Naive thymus-derived CD4-positive, alpha-beta T cell (primary cell): ENCODE measurements at regions of chr7 and their contacts with region 1.

Region 1: GRCh38 chr7:27662490-27663205 is at the start of gene HIBADH:
- DNase-seq: peak; percentile 94 to 99 (median 97)
- ATAC-seq: peak; percentile 97
- H3K4me3 ChIP-seq: peak within 1 kb of the TSS; percentile 97
- H3K4me3 Mint-ChIP-seq: peak within 1 kb of the TSS; percentile 81 to 92 (median 86)
- H3K27ac ChIP-seq: peak within 1 kb of the TSS; percentile 89
- H3K27ac Mint-ChIP-seq: peak within 1 kb of the TSS; percentile 84 to 97 (median 93)
- H3K4me1 ChIP-seq: peaks cover 6% of the 10 kb centered on the region in 2 donors
- H3K4me1 Mint-ChIP-seq: peaks cover 0 to 40% (median 25%) of the 10 kb centered on the region in 7 donors
- H3K27me3 ChIP-seq: no peaks in the 10 kb centered on the region
- H3K27me3 Mint-ChIP-seq: peaks cover 0 to 2% (median 0%) of the 10 kb centered on the region in 5 donors
- total RNA-seq, gene HIBADH: 8.0 to 16.5 (median 14.3) TPM

Region 2: GRCh38 chr7:25951031-25951948 is 1711.4 kb before region 1 on chr7:
- CTCF ChIA-PET with region 1: no interaction called
- POLR2A ChIA-PET with region 1: no interaction called
- intact Hi-C with region 1: loop called (anchors 2 to 5 kb)
- DNase-seq: peak; percentile 70 to 94 (median 87)
- ATAC-seq: peak; percentile 99
- H3K4me3 ChIP-seq: peak overlapping the region; percentile 61
- H3K4me3 Mint-ChIP-seq: peak overlapping the region; percentile 87 to 94 (median 92)
- H3K27ac ChIP-seq: peak overlapping the region; percentile 52
- H3K27ac Mint-ChIP-seq: peak overlapping the region in 7 of 9 donors; percentile 45 to 87 (median 81)
- H3K4me1 ChIP-seq: peaks cover 7 to 14% of the 10 kb centered on the region in 2 donors
- H3K4me1 Mint-ChIP-seq: peaks cover 16 to 31% (median 20%) of the 10 kb centered on the region in 7 donors
- H3K27me3 ChIP-seq: no peaks in the 10 kb centered on the region
- H3K27me3 Mint-ChIP-seq: peaks cover 0 to 22% (median 5%) of the 10 kb centered on the region in 5 donors

Region 3: GRCh38 chr7:27184337-27185012 is 478.2 kb before region 1 on chr7:
- CTCF ChIA-PET with region 1: no interaction called
- POLR2A ChIA-PET with region 1: no interaction called
- intact Hi-C with region 1: loop called in 1 of 2 experiments (anchors 5 kb)
- DNase-seq: peak in 2 of 9 donors; percentile 36 to 38
- ATAC-seq: peak; percentile 22
- H3K4me3 ChIP-seq: peak overlapping the region; percentile 39
- H3K4me3 Mint-ChIP-seq: peak overlapping the region; percentile 69 to 87 (median 79)
- H3K27ac ChIP-seq: no peak overlapping the region
- H3K27ac Mint-ChIP-seq: peak overlapping the region in 7 of 9 donors; percentile 43 to 84 (median 73)
- H3K4me1 ChIP-seq: peaks cover 40 to 52% of the 10 kb centered on the region in 2 donors
- H3K4me1 Mint-ChIP-seq: peaks cover 29 to 62% (median 51%) of the 10 kb centered on the region in 7 donors
- H3K27me3 ChIP-seq: peaks cover 47 to 89% of the 10 kb centered on the region in 2 donors
- H3K27me3 Mint-ChIP-seq: peaks cover 78 to 92% (median 81%) of the 10 kb centered on the region in 5 donors

Region 4: DNA sequence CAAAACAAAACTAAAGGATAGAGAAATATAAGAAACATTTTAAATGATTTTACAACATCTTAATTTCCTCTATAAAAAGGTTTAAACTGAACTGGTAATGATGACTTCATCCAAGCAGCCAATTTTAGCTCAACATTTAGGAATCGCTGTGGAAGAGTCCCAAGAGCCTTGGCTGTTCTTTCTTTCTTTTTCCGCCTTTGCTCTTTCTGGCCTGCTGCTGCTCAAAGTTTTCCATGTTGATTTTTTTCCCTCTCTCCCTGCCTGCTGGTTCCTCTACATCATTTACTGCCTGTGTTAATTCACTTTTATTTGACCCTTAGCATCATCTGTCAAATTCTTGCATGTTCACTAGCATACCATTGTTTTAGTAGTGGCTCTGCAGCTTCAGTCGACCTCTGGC is 273.2 kb before region 1 on chr7:
- CTCF ChIA-PET with region 1: no interaction called
- POLR2A ChIA-PET with region 1: no interaction called
- intact Hi-C with region 1: no loop called
- DNase-seq: no peak
- ATAC-seq: no peak
- H3K4me3 ChIP-seq: no peak overlapping the region
- H3K4me3 Mint-ChIP-seq: no peak overlapping the region
- H3K27ac ChIP-seq: no peak overlapping the region
- H3K27ac Mint-ChIP-seq: no peak overlapping the region
- H3K4me1 ChIP-seq: no peaks in the 10 kb centered on the region
- H3K4me1 Mint-ChIP-seq: no peaks in the 10 kb centered on the region
- H3K27me3 ChIP-seq: no peaks in the 10 kb centered on the region
- H3K27me3 Mint-ChIP-seq: peaks cover 25 to 48% (median 32%) of the 10 kb centered on the region in 5 donors

Region 5: DNA sequence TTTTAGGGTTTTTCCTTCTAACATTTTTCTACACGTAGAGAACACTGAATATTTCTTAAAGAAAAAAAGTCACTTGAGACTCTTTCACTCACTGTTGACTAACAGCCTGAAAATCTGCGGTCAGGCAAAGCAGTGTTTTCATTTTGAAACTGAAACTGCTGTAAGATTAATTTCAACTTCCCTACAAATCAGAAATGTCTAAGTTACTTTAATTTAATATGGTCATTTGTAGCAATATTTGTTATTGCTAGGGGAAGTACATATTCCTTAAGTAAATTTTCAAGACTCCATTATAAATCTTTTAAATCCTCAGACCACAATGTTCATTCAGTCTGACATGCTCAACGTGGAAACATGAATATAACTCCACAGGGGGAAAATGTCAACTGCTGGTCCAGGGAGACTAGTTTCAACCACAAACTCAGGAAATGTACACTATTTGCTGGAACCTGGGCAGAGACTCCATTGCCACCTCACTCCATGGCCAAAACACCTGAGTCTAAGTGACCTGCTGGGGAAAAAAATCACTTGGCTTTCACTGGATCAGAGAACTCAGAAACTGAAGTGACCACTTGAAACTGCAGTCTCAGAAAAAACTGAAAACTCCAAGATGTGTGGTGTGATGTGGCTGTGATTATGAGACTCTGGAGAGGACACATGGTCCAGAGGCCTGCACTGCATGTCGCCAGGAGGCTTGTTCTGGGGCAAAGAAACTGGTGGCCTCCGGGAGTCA is 238.5 kb after region 1 on chr7:
- CTCF ChIA-PET with region 1: no interaction called
- POLR2A ChIA-PET with region 1: no interaction called
- intact Hi-C with region 1: loop called in 1 of 2 experiments (anchors 2 kb)
- DNase-seq: peak in 4 of 9 donors; percentile 7 to 50 (median 29)
- ATAC-seq: peak; percentile 83
- H3K4me3 ChIP-seq: peak overlapping the region; percentile 14
- H3K4me3 Mint-ChIP-seq: peak overlapping the region; percentile 26 to 75 (median 66)
- H3K27ac ChIP-seq: no peak overlapping the region
- H3K27ac Mint-ChIP-seq: peak overlapping the region; percentile 56 to 85 (median 61)
- H3K4me1 ChIP-seq: peaks cover 5 to 8% of the 10 kb centered on the region in 2 donors
- H3K4me1 Mint-ChIP-seq: peaks cover 26 to 57% (median 33%) of the 10 kb centered on the region in 7 donors
- H3K27me3 ChIP-seq: no peaks in the 10 kb centered on the region
- H3K27me3 Mint-ChIP-seq: peaks cover 0 to 7% (median 0%) of the 10 kb centered on the region in 5 donors

Region 6: GRCh38 chr7:28020302-28020940 is 357.8 kb after region 1 on chr7:
- CTCF ChIA-PET with region 1: interaction called, 3 read pairs
- POLR2A ChIA-PET with region 1: no interaction called
- intact Hi-C with region 1: loop called in 1 of 2 experiments (anchors 1 kb)
- DNase-seq: peak in 7 of 9 donors; percentile 27 to 63 (median 53)
- ATAC-seq: peak; percentile 90
- H3K4me3 ChIP-seq: no peak overlapping the region
- H3K4me3 Mint-ChIP-seq: peak overlapping the region in 1 of 10 donors; percentile 11
- H3K27ac ChIP-seq: no peak overlapping the region
- H3K27ac Mint-ChIP-seq: no peak overlapping the region
- H3K4me1 ChIP-seq: no peaks in the 10 kb centered on the region
- H3K4me1 Mint-ChIP-seq: peaks cover 0 to 17% (median 2%) of the 10 kb centered on the region in 7 donors
- H3K27me3 ChIP-seq: no peaks in the 10 kb centered on the region
- H3K27me3 Mint-ChIP-seq: peaks cover 0 to 3% (median 0%) of the 10 kb centered on the region in 5 donors